GM12878 (cell line): ENCODE measurements at regions of chr1 and their contacts with region 1.

Region 1: GRCh38 chr1:205961405-205961804 is 18.1 kb upstream of the SLC26A9 start:
- DNase-seq: no peak
- ATAC-seq: peak; percentile 87
- H3K4me3 ChIP-seq: no peak overlapping the region
- H3K27ac ChIP-seq: no peak overlapping the region
- H3K4me1 ChIP-seq: peaks cover 9% of the 10 kb centered on the region; the same call in 1 of the 2 replicates
- H3K27me3 ChIP-seq: peaks cover 0 to 2% of the 10 kb centered on the region in 2 experiments; a peak in 3 of 4 replicates
- CTCF ChIP-seq: no peak
- EP300 ChIP-seq: no peak
- POLR2A ChIP-seq: no peak
- RAD21 ChIP-seq: no peak

Region 2: DNA sequence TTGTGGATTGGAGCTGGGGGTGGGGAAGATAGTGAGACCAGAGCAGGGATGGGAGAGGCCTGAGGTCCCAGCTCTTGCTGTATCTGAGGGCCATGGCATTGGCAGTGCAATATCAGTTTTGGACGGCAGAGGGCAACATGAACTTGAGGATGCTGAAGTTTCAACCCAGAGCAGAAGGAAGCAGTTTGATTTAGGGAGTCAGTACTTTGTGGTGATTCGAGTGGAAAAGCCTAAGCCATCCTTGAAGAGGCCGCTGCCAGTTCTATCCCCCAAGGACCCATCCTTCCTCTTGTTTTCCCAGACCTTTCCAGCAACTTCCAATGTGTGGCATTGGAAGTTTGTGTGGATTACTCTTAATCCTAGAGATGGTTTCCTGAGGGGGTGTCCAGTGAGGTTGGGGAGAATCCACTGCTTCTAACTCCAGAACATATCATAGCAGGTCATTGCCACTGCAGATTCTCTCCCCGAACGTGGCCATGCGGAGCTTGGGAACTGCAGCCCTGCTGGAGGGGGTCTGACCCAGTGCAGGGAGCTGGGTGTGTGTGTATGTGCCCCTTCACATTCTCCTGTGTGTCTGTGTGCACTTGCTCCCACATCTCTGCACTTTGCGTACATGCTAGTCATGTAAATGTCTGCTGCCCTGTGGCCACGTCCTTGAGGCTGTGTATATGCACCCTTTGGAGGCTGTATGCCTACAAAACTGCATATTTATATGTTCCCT is 42.2 kb before region 1 on chr1:
- CTCF ChIA-PET with region 1: interaction called, 4 read pairs
- POLR2A ChIA-PET with region 1: no interaction called
- RAD21 ChIA-PET with region 1: interaction called, 14 read pairs
- SMC1A ChIA-PET with region 1: interaction called, 3 read pairs
- in situ Hi-C with region 1: no loop called
- intact Hi-C with region 1: no loop called
- DNase-seq: peak; percentile 24
- ATAC-seq: peak; percentile 94
- H3K4me3 ChIP-seq: no peak overlapping the region
- H3K27ac ChIP-seq: no peak overlapping the region
- H3K4me1 ChIP-seq: no peaks in the 10 kb centered on the region; the same call in 1 of the 2 replicates
- H3K27me3 ChIP-seq: peaks cover 2 to 4% of the 10 kb centered on the region in 2 experiments; a peak in 2 of 4 replicates
- CTCF ChIP-seq: peak; percentile 90 to 93 (median 93)
- EP300 ChIP-seq: no peak
- POLR2A ChIP-seq: no peak
- RAD21 ChIP-seq: peak; percentile 91